ENCODE measurements at regions of chr1 and their contacts with region 1.

Region 1: DNA sequence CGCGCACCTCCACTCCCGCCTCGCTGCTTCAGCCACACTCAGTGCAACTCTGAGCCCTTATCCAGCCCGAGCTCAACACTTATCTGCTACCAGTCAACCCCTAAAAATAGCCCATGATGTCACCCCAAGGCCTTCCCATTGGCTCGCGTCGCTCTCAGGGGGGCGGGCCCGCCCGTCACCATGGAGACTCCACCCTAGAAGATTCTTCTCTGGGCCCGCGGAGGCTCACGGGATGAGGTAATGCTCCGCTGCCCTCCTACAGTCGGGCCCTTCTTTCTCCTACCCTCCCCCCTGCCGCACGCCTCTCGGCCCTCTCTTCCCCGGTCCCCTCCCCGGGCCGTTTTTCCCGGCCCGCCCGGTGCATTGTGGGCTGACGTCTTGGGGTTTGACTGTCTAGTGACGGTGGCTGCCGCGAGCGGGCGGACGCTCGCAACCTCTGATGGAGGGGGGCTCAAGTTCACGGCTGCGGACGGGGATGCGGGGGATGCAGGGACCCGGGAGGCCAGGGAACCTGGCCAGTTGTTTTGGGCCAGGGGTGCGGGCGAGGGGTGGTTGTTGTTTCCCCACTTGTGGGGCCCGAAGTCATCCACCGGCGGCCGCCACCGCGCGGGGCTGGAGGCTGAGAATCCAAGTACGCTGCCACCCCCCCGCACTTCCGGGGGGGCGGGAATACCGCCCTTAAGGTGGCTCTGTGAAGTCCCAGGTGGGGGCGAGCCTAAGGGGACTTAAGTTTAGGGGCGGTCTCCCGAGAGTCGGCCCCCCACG is at the start of gene JUN:
- H3K4me3 ChIP-seq: peak within 1 kb of the TSS; percentile 91
- H3K27ac ChIP-seq: peak within 1 kb of the TSS; percentile 98
- H3K4me1 ChIP-seq: peaks cover 9% of the 10 kb centered on the region
- CTCF ChIP-seq: no peak; the same call in 1 of the 2 replicates

Region 2: DNA sequence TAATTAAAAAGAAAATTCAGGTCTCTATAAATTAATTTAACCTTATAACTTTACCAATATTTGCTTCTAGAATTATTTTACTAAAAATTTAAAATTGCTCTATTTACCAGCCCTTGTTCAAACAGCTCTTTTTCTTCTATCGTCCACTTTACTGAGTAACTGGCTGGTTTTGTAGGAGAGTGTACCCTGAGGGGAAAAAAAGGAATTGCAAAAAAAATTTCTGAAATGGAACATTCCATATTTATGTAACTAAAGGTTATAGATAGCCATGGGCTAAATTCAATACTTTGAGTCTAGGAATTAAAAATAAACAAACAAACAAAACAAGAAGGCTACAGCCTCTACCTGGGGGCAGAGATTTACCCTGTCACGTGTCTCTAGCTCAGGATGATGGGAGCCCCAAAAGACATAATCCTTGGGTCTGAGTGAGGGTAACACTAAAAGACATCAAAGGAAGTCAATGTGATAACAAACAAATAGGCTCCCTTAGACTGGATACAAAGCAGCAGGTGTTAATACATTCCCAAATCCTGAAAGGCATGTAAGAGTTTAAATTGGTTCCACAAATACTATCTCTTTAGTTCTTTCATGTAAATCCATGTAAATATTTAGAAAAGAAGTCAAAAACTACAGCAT is 95.1 kb before region 1 on chr1:
- CTCF ChIA-PET with region 1: no interaction called
- POLR2A ChIA-PET with region 1: no interaction called
- H3K4me3 ChIP-seq: no peak overlapping the region
- H3K27ac ChIP-seq: no peak overlapping the region
- H3K4me1 ChIP-seq: no peaks in the 10 kb centered on the region
- CTCF ChIP-seq: no peak

Region 3: DNA sequence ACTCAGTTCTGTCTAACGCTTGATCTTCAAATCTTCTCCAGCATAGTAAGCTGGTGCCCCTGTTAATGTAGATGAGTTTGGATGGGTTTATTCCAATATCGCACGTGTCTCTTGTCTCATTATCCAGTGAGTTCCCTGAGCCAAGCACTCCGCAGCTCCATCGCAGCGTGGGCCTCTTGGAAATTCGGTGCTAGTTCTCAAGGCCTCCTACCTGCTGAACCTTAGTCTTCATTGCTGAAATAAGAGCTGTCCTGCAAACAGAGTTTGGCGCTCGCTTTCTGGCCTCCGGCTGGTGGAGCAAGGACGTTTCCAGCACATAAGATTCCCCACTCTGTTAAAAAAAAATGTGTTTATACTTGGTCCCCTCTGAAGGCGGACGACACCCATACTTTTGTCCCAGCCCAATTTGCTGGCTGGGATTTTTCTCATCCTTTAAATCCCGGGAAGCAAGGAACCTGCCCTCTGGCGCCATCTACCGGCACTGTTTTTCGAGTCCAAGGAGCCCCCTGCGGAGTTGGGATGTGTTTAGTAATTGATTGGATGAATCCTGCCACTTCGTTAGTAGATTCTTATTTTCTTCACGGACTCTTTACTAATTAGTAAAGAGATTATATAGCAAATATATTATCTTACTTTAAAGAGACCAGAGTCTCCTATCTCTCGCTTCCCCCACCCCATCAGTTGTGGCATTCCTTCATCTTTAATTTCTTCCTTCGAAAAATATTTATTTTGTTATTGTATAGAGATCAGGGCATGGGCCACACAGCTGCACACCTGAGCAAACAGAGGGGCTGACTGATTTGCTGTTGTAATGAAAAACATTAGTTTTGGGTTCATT is 15.0 kb before region 1 on chr1:
- CTCF ChIA-PET with region 1: interaction called, 17 read pairs
- POLR2A ChIA-PET with region 1: interaction called, 20 read pairs
- H3K4me3 ChIP-seq: no peak overlapping the region
- H3K27ac ChIP-seq: no peak overlapping the region
- H3K4me1 ChIP-seq: no peaks in the 10 kb centered on the region
- CTCF ChIP-seq: peak; percentile 26; the same call in 1 of the 2 replicates

Region 4: DNA sequence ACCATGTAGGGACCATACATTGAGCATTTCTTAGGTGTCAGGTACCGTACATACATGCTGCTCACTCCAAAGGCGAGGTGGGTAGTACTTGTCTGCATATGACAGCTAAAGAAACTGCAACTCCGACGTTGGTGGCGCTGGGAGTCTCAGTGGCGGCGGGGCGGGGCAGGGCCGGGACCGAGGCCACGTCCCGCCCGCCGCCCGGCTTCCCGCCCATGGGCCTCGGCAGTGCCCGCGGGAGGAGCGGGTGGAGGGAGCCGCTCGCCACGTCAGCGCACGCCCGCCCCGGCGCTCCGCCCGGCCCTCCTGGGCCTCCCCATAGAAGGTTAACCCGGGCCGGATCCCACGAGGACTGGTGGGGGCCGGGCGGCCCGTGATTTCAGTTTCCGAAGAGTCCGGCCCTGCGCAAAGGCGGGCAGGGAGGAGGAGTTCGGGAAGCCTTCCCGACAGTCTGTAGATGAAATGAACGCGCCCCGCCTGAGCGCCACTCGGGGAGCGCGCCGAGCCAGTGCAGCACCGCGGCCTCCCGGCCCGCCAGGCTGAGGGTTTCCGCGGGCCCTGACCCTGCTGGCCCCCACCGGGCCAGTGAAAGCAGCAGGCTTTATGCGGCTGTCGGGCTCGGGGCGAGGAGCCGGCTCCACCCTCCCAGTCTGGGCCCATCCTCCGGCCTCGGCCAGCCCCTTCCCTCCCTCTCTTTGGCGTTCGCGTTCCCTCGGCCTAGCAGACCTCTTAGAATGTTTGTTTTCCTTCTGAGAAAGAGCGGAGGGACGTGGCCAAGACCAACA is 119.5 kb after region 1 on chr1:
- CTCF ChIA-PET with region 1: interaction called, 5 read pairs
- POLR2A ChIA-PET with region 1: interaction called, 10 read pairs
- H3K4me3 ChIP-seq: peak overlapping the region; percentile 44
- H3K27ac ChIP-seq: peak overlapping the region; percentile 96
- H3K4me1 ChIP-seq: 0 out of 2 replicates have a peak, but pooled peaks cover 2% of the 10 kb centered on the region
- CTCF ChIP-seq: no peak

Region 5: GRCh38 chr1:59020151-59020997 is 236.2 kb after region 1 on chr1:
- CTCF ChIA-PET with region 1: no interaction called
- POLR2A ChIA-PET with region 1: no interaction called
- H3K4me3 ChIP-seq: no peak overlapping the region
- H3K27ac ChIP-seq: no peak overlapping the region
- H3K4me1 ChIP-seq: no peaks in the 10 kb centered on the region
- CTCF ChIP-seq: no peak

Region 6: GRCh38 chr1:59076612-59077011 is 292.4 kb after region 1 on chr1:
- CTCF ChIA-PET with region 1: interaction called, 5 read pairs
- POLR2A ChIA-PET with region 1: interaction called, 13 read pairs
- H3K4me3 ChIP-seq: no peak overlapping the region
- H3K27ac ChIP-seq: peak overlapping the region; percentile 84; the same call in 1 of the 2 replicates
- H3K4me1 ChIP-seq: peaks cover 28% of the 10 kb centered on the region
- CTCF ChIP-seq: no peak